Caco-2 (cell line): ENCODE measurements at regions of chr3 and their contacts with region 1.

Region 1: GRCh38 chr3:33355611-33356010 is 78.4 kb downstream of the FBXL2 start:
- DNase-seq: peak; percentile 59 to 71
- H3K4me3 ChIP-seq: no peak overlapping the region
- H3K4me3 Mint-ChIP-seq: peak overlapping the region; percentile 60
- H3K27ac Mint-ChIP-seq: peak overlapping the region; percentile 27
- H3K4me1 ChIP-seq: peaks cover 17% of the 10 kb centered on the region
- H3K4me1 Mint-ChIP-seq: peaks cover 6% of the 10 kb centered on the region
- H3K27me3 ChIP-seq: no peaks in the 10 kb centered on the region
- H3K27me3 Mint-ChIP-seq: no peaks in the 10 kb centered on the region
- CTCF ChIP-seq: no peak

Region 2: DNA sequence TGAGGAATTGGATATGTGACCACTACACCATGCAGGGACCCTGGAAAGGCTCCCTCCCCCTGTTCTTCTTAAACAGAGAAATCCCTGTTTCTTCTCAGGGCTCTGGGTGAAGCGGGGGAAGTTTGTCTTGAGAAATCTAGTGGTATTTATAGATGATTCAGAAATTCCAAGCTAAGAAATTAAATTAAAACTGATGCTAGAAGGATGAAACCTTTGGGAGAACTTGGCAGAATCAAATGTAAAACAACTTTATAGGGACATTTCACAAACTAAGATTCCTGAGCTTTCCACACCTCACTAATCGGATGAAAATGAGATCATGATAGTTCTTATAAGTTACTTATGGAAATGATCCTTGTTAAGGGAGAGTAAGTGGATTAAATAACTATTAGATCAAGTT is 24.2 kb before region 1 on chr3:
- CTCF ChIA-PET with region 1: no interaction called
- POLR2A ChIA-PET with region 1: no interaction called
- intact Hi-C with region 1: loop called (anchors 1 kb)
- DNase-seq: no peak
- H3K4me3 ChIP-seq: no peak overlapping the region
- H3K4me3 Mint-ChIP-seq: no peak overlapping the region
- H3K27ac Mint-ChIP-seq: no peak overlapping the region
- H3K4me1 ChIP-seq: no peaks in the 10 kb centered on the region
- H3K4me1 Mint-ChIP-seq: no peaks in the 10 kb centered on the region
- H3K27me3 ChIP-seq: no peaks in the 10 kb centered on the region
- H3K27me3 Mint-ChIP-seq: no peaks in the 10 kb centered on the region
- CTCF ChIP-seq: no peak

Region 3: GRCh38 chr3:33385423-33385822 is 29.8 kb after region 1 on chr3:
- CTCF ChIA-PET with region 1: no interaction called
- POLR2A ChIA-PET with region 1: no interaction called
- intact Hi-C with region 1: no loop called
- DNase-seq: no peak
- H3K4me3 ChIP-seq: no peak overlapping the region
- H3K4me3 Mint-ChIP-seq: no peak overlapping the region
- H3K27ac Mint-ChIP-seq: no peak overlapping the region
- H3K4me1 ChIP-seq: no peaks in the 10 kb centered on the region
- H3K4me1 Mint-ChIP-seq: no peaks in the 10 kb centered on the region
- H3K27me3 ChIP-seq: no peaks in the 10 kb centered on the region
- H3K27me3 Mint-ChIP-seq: no peaks in the 10 kb centered on the region
- CTCF ChIP-seq: no peak